K562 (cell line): ENCODE measurements at regions of chr3 and their contacts with region 1.

Region 1: GRCh38 chr3:8702560-8702959 is 31.0 kb upstream of the CAV3 start:
- DNase-seq: peak; percentile 27 to 63 (median 50)
- ATAC-seq: peak; percentile 76
- H3K4me3 ChIP-seq: no peak overlapping the region
- H3K27ac ChIP-seq: no peak overlapping the region
- H3K4me1 ChIP-seq: no peaks in the 10 kb centered on the region
- H3K27me3 ChIP-seq: no peaks in the 10 kb centered on the region
- CTCF ChIP-seq: peak; percentile 63 to 83 (median 70)
- EP300 ChIP-seq: no peak
- POLR2A ChIP-seq: no peak
- RAD21 ChIP-seq: no peak

Region 2: GRCh38 chr3:8416965-8417364 is 285.6 kb before region 1 on chr3:
- CTCF ChIA-PET with region 1: interaction called, 10 read pairs
- POLR2A ChIA-PET with region 1: no interaction called
- in situ Hi-C with region 1: no loop called
- intact Hi-C with region 1: no loop called
- DNase-seq: peak; percentile 34 to 46 (median 38)
- ATAC-seq: peak; percentile 98
- H3K4me3 ChIP-seq: no peak overlapping the region
- H3K27ac ChIP-seq: no peak overlapping the region
- H3K4me1 ChIP-seq: no peaks in the 10 kb centered on the region
- H3K27me3 ChIP-seq: no peaks in the 10 kb centered on the region
- CTCF ChIP-seq: no peak
- EP300 ChIP-seq: no peak
- POLR2A ChIP-seq: no peak
- RAD21 ChIP-seq: no peak

Region 3: GRCh38 chr3:8869613-8870012 is 167.1 kb after region 1 on chr3:
- CTCF ChIA-PET with region 1: no interaction called
- POLR2A ChIA-PET with region 1: no interaction called
- in situ Hi-C with region 1: no loop called
- intact Hi-C with region 1: no loop called
- DNase-seq: no peak
- ATAC-seq: no peak
- H3K4me3 ChIP-seq: no peak overlapping the region
- H3K27ac ChIP-seq: no peak overlapping the region
- H3K4me1 ChIP-seq: no peaks in the 10 kb centered on the region
- H3K27me3 ChIP-seq: no peaks in the 10 kb centered on the region
- CTCF ChIP-seq: no peak
- EP300 ChIP-seq: no peak
- POLR2A ChIP-seq: no peak
- RAD21 ChIP-seq: no peak

Region 4: DNA sequence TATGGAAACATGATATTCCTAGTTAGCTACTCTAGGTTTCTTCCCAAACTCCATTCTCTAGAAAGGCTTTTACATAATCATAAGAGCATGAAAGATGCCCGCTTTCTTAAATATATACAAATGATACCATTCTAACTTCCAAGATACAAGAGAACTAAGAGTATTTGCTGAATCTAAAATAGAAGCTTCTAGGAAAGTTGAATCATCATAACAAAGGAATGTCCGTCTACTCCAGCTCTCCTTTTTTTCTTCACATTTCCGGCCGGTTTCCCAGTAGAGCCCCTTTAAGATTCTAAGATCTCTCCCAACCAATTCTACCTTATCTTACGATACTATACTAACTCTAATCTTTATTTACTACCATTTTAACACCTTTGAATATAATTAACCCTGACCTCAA is 200.6 kb after region 1 on chr3:
- CTCF ChIA-PET with region 1: no interaction called
- POLR2A ChIA-PET with region 1: no interaction called
- in situ Hi-C with region 1: no loop called
- intact Hi-C with region 1: no loop called
- DNase-seq: no peak
- ATAC-seq: no peak
- H3K4me3 ChIP-seq: no peak overlapping the region
- H3K27ac ChIP-seq: no peak overlapping the region
- H3K4me1 ChIP-seq: no peaks in the 10 kb centered on the region
- H3K27me3 ChIP-seq: no peaks in the 10 kb centered on the region
- CTCF ChIP-seq: no peak
- EP300 ChIP-seq: no peak
- POLR2A ChIP-seq: no peak
- RAD21 ChIP-seq: no peak